Vagina (tissue), 2 donors: ENCODE measurements at regions of chr9 and their contacts with region 1.

Region 1: GRCh38 chr9:93268551-93269314 is 84.8 kb downstream of the WNK2 start:
- DNase-seq: peak in 1 of 2 donors; percentile 70
- H3K4me3 ChIP-seq: no peak overlapping the region
- H3K27ac ChIP-seq: no peak overlapping the region
- H3K4me1 ChIP-seq: no peaks in the 10 kb centered on the region
- H3K27me3 ChIP-seq: no peaks in the 10 kb centered on the region
- CTCF ChIP-seq: no peak
- POLR2A ChIP-seq: no peak

Region 2: GRCh38 chr9:93292664-93293328 is 24.1 kb after region 1 on chr9:
- intact Hi-C with region 1: no loop called
- DNase-seq: no peak
- H3K4me3 ChIP-seq: no peak overlapping the region
- H3K27ac ChIP-seq: no peak overlapping the region
- H3K4me1 ChIP-seq: peaks cover 12% of the 10 kb centered on the region
- H3K27me3 ChIP-seq: no peaks in the 10 kb centered on the region
- CTCF ChIP-seq: no peak
- POLR2A ChIP-seq: no peak

Region 3: GRCh38 chr9:93324191-93324977 is 55.7 kb after region 1 on chr9:
- intact Hi-C with region 1: loop called (anchors 2 kb)
- DNase-seq: no peak
- H3K4me3 ChIP-seq: no peak overlapping the region
- H3K27ac ChIP-seq: no peak overlapping the region
- H3K4me1 ChIP-seq: no peaks in the 10 kb centered on the region
- H3K27me3 ChIP-seq: no peaks in the 10 kb centered on the region
- CTCF ChIP-seq: no peak
- POLR2A ChIP-seq: no peak